CD8-positive, alpha-beta T cell (primary cell): ENCODE measurements at regions of chr3 and their contacts with region 1.

Region 1: DNA sequence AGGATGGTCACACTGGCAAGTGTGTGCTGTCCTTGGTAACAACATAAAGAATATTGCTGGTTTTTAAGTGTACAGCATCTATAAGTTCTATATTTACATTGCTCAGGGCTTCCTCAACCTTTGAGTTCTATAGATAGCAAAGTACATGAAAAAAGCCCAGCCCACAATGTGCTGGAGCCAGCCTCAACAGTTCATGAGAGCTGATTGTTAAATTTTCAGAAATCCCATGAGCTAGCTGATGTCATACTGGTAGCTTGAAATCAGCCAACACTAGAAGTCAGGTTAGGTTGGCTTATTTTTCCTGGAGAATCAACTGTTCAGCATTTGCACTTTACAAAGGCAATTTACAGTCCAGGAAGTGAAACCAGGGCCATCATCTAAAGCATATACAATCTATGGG is 102.8 kb downstream of the STRIT1 start:
- DNase-seq: no peak
- ATAC-seq: no peak
- H3K4me3 ChIP-seq: no peak overlapping the region
- H3K4me3 Mint-ChIP-seq: no peak overlapping the region
- H3K27ac ChIP-seq: no peak overlapping the region
- H3K27ac Mint-ChIP-seq: no peak overlapping the region
- H3K4me1 ChIP-seq: no peaks in the 10 kb centered on the region
- H3K4me1 Mint-ChIP-seq: no peaks in the 10 kb centered on the region
- H3K27me3 ChIP-seq: no peaks in the 10 kb centered on the region
- H3K27me3 Mint-ChIP-seq: no peaks in the 10 kb centered on the region
- CTCF ChIP-seq: no peak

Region 2: DNA sequence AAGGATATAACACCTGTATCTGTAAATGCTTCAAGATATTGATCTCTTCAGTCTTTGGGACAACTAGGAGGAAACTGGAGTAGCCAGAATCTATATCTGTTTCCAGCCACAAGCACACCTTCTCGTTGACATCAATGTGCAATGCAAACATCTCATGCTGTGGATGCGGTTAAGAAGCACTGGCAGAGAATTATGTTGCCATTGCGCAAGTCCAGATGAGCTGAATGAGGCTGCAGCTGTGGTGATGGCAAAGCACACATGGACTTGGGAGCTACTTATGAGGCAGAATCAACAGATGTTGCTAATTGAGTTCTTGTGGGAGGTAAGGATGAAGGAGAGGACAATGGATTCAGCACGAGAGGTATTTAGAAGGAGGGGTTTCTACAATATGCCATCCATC is 11.9 kb after region 1 on chr3:
- CTCF ChIA-PET with region 1: no interaction called
- POLR2A ChIA-PET with region 1: interaction called, 5 read pairs
- intact Hi-C with region 1: loop called in 1 of 2 experiments (anchors 1 kb)
- DNase-seq: no peak
- ATAC-seq: no peak
- H3K4me3 ChIP-seq: no peak overlapping the region
- H3K4me3 Mint-ChIP-seq: no peak overlapping the region
- H3K27ac ChIP-seq: no peak overlapping the region
- H3K27ac Mint-ChIP-seq: no peak overlapping the region
- H3K4me1 ChIP-seq: no peaks in the 10 kb centered on the region
- H3K4me1 Mint-ChIP-seq: no peaks in the 10 kb centered on the region
- H3K27me3 ChIP-seq: no peaks in the 10 kb centered on the region
- H3K27me3 Mint-ChIP-seq: no peaks in the 10 kb centered on the region
- CTCF ChIP-seq: no peak

Region 3: GRCh38 chr3:155335724-155336354 is 145.1 kb after region 1 on chr3:
- CTCF ChIA-PET with region 1: no interaction called
- POLR2A ChIA-PET with region 1: no interaction called
- intact Hi-C with region 1: no loop called
- DNase-seq: no peak
- ATAC-seq: no peak
- H3K4me3 ChIP-seq: no peak overlapping the region
- H3K4me3 Mint-ChIP-seq: no peak overlapping the region
- H3K27ac ChIP-seq: no peak overlapping the region
- H3K27ac Mint-ChIP-seq: no peak overlapping the region
- H3K4me1 ChIP-seq: peaks cover 10% of the 10 kb centered on the region
- H3K4me1 Mint-ChIP-seq: peaks cover 11% of the 10 kb centered on the region
- H3K27me3 ChIP-seq: no peaks in the 10 kb centered on the region
- H3K27me3 Mint-ChIP-seq: no peaks in the 10 kb centered on the region
- CTCF ChIP-seq: no peak